Heart right ventricle (tissue), 16 donors: ENCODE measurements at regions of chr9 and their contacts with region 1.

Region 1: GRCh38 chr9:35464141-35465025 is 25.5 kb upstream of the RUSC2 start:
- DNase-seq: no peak
- ATAC-seq: no peak
- H3K4me3 ChIP-seq: no peak overlapping the region
- H3K27ac ChIP-seq: no peak overlapping the region
- H3K4me1 ChIP-seq: peaks cover 0 to 6% (median 0%) of the 10 kb centered on the region in 9 donors
- H3K27me3 ChIP-seq: no peaks in the 10 kb centered on the region
- CTCF ChIP-seq: no peak

Region 2: GRCh38 chr9:35001803-35002502 is 462.4 kb before region 1 on chr9:
- intact Hi-C with region 1: loop called in 1 of 10 experiments (anchors 5 kb)
- DNase-seq: no peak
- ATAC-seq: no peak
- H3K4me3 ChIP-seq: no peak overlapping the region
- H3K27ac ChIP-seq: no peak overlapping the region
- H3K4me1 ChIP-seq: peaks cover 0 to 16% (median 6%) of the 10 kb centered on the region in 9 donors
- H3K27me3 ChIP-seq: no peaks in the 10 kb centered on the region
- CTCF ChIP-seq: no peak

Region 3: GRCh38 chr9:35406183-35406956 is 58.0 kb before region 1 on chr9:
- intact Hi-C with region 1: loop called in 1 of 10 experiments (anchors 10 kb)
- DNase-seq: peak in 1 of 2 donors; percentile 41
- ATAC-seq: peak in 7 of 8 donors; percentile 19 to 63 (median 53)
- H3K4me3 ChIP-seq: no peak overlapping the region
- H3K27ac ChIP-seq: no peak overlapping the region
- H3K4me1 ChIP-seq: peaks cover 0 to 4% (median 0%) of the 10 kb centered on the region in 9 donors
- H3K27me3 ChIP-seq: no peaks in the 10 kb centered on the region
- CTCF ChIP-seq: no peak

Region 4: DNA sequence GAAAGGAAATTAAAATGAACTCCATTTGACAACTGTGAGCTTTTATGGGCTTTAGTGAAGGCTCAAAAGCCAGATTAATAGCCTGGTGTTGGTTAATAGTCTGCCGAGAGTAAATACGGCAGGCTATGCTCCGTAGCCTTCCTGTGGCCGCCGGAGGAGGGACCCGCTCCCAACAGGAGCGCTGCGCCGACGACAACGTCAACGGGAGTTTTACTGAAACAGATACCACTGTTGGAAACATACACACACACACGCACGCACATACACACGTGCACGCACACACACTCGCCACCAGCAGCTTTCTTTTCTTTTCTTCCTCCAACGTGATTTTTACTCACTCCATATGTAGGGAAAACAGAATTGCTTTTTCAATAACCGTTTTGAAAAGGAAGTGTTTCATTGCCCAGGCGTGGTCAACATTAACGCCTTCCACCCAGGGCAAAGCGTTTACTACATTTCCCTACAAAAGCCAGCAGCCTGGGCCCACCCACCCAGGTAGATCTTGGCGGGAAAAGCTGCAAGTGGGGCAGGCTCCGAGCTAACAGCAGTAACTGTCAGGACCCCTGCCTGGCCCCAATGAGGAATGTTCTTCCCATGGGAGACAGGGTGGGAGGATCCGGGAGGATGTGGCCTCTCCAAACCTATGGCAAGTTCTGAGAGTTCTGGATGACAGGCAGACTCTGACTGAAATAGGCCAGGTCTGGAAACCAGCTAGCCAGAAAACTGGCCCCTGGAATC is 1497.3 kb after region 1 on chr9:
- intact Hi-C with region 1: no loop called
- DNase-seq: no peak
- ATAC-seq: no peak
- H3K4me3 ChIP-seq: peak overlapping the region in 1 of 10 donors; percentile 24
- H3K27ac ChIP-seq: no peak overlapping the region
- H3K4me1 ChIP-seq: peaks cover 0 to 3% (median 0%) of the 10 kb centered on the region in 9 donors
- H3K27me3 ChIP-seq: peaks cover 0 to 50% (median 19%) of the 10 kb centered on the region in 7 donors
- CTCF ChIP-seq: no peak